SK-N-SH (cell line): ENCODE measurements at regions of chr7 and their contacts with region 1.

Region 1: GRCh38 chr7:129258649-129259389 is 34.0 kb downstream of the AHCYL2 start:
- DNase-seq: no peak
- H3K4me3 ChIP-seq: no peak overlapping the region
- H3K27ac ChIP-seq: no peak overlapping the region
- H3K4me1 ChIP-seq: no peaks in the 10 kb centered on the region
- H3K27me3 ChIP-seq: no peaks in the 10 kb centered on the region
- CTCF ChIP-seq: no peak
- EP300 ChIP-seq: no peak
- RAD21 ChIP-seq: no peak

Region 2: DNA sequence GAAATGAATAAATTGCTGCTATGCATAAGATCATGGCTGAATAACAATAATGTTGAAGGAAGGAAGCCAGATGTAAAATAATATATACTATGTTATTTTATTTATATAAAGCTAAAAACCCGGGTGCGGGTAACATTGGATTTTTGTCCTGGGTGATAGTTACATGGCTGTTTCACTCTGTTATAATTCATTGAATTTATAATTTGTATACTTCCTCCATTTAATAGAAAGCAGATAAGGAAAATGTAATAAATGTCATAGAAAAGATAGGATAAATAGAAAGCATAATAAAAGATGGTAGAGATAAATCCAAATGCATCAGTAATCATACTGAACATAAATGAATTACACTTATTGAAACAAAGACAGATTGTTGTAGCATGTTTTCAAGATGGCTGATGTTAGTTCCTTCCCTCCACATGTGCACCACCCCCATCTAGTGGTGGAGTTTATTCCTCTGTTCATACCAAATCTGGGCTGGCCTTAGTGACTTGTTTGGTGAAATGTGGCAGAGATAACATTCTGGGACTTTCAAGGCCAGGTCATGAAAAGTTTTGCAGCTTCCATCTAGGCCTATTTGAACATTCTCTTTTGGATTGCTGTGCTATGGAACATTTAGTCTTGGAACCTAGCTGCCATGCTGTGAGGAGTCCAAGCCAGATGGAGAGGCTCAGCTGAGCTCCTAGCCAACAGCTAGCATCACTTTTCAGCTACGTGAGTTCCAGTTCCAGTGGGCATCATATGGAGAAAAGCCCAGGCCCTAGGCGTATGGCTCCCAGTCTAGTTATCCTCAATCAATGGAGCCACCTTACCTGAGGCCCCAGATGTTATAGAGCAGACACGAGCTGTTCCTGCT is 12.9 kb after region 1 on chr7:
- CTCF ChIA-PET with region 1: interaction called, 18 read pairs
- POLR2A ChIA-PET with region 1: no interaction called
- DNase-seq: peak; percentile 57
- H3K4me3 ChIP-seq: no peak overlapping the region
- H3K27ac ChIP-seq: no peak overlapping the region
- H3K4me1 ChIP-seq: no peaks in the 10 kb centered on the region
- H3K27me3 ChIP-seq: no peaks in the 10 kb centered on the region
- CTCF ChIP-seq: peak; percentile 71
- EP300 ChIP-seq: peak in 1 of 2 experiments; percentile 48; a peak in 1 of 4 replicates
- RAD21 ChIP-seq: peak; percentile 81